Activated CD4-positive, alpha-beta T cell treated with anti-CD3 and anti-CD28 coated beads, Interleukin-2, amount 10 ng/mL, durations not matched to agents 24 days and 14 days (primary cell): ENCODE measurements at regions of chr5 and their contacts with region 1.

Region 1: GRCh38 chr5:157603333-157604190 is 28.0 kb upstream of the ADAM19 start:
- DNase-seq: peak; percentile 92
- H3K4me3 Mint-ChIP-seq: peak overlapping the region; percentile 65
- H3K27ac Mint-ChIP-seq: peak overlapping the region; percentile 88
- H3K4me1 Mint-ChIP-seq: peaks cover 73% of the 10 kb centered on the region
- H3K27me3 Mint-ChIP-seq: no peaks in the 10 kb centered on the region

Region 2: DNA sequence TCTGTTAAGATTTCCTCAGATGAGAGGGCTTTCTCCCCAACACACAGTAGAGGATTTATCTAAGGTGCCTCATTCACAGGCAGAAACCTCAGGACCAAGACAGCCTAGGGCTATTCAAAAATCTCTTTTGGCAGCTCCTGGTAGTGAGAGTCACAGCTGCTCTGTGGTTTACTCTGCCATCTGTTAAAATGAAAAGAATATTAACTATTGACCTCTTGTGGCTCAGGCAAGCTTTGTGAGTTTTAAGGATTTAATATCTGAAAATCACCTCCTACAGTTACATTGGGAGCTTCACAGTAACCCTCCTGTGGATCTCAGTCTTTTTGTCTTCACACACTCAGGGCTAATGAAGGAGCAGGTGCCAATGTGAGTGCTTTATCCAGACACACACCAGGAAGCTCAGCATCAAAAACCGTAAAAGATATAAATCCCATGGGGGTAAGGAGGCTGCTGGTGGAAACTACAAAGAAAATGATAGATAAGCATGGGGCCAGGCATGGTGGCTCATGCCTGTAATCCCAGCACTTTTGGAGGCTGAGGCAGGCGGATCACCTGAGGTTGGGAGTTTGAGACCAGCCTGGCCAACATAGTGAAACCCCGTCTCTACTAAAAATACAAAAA is 723.8 kb before region 1 on chr5:
- intact Hi-C with region 1: no loop called
- DNase-seq: no peak
- H3K4me3 Mint-ChIP-seq: no peak overlapping the region
- H3K27ac Mint-ChIP-seq: no peak overlapping the region
- H3K4me1 Mint-ChIP-seq: no peaks in the 10 kb centered on the region
- H3K27me3 Mint-ChIP-seq: peaks cover 1% of the 10 kb centered on the region

Region 3: GRCh38 chr5:157172403-157172802 is 431.2 kb before region 1 on chr5:
- intact Hi-C with region 1: loop called (anchors 10 kb)
- DNase-seq: peak; percentile 95
- H3K4me3 Mint-ChIP-seq: peak overlapping the region; percentile 81
- H3K27ac Mint-ChIP-seq: peak overlapping the region; percentile 96
- H3K4me1 Mint-ChIP-seq: peaks cover 76% of the 10 kb centered on the region
- H3K27me3 Mint-ChIP-seq: no peaks in the 10 kb centered on the region

Region 4: GRCh38 chr5:157354800-157355199 is 248.8 kb before region 1 on chr5:
- intact Hi-C with region 1: loop called (anchors 2 kb)
- DNase-seq: no peak
- H3K4me3 Mint-ChIP-seq: no peak overlapping the region
- H3K27ac Mint-ChIP-seq: peak overlapping the region; percentile 69
- H3K4me1 Mint-ChIP-seq: peaks cover 38% of the 10 kb centered on the region
- H3K27me3 Mint-ChIP-seq: no peaks in the 10 kb centered on the region

Region 5: DNA sequence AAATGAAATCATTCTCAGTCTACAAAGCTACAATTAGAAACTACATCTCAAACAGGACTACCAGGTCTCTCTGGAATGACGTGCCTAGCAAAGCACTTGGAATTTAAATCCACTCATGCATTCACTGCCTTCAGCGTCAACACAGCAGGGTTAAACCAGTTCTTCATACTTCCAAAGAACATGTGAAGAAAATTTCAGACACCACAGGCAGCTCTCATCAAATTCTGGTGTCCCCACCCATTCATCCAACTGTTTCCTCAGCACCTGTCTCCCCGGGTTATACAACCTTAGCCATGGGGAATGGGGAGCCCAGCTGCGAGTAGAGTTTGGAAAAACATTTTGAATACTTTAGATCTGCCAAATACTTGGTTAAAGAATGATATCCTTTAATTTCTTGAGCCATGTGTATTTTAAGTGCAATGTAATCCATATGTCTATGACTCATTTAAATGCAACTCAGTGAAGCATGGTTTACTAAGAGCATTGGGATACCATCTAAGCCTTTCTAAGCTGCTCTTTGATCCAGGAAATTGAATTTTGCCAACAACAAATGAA is 45.4 kb before region 1 on chr5:
- intact Hi-C with region 1: no loop called
- DNase-seq: no peak
- H3K4me3 Mint-ChIP-seq: no peak overlapping the region
- H3K27ac Mint-ChIP-seq: no peak overlapping the region
- H3K4me1 Mint-ChIP-seq: peaks cover 76% of the 10 kb centered on the region
- H3K27me3 Mint-ChIP-seq: no peaks in the 10 kb centered on the region

Region 6: DNA sequence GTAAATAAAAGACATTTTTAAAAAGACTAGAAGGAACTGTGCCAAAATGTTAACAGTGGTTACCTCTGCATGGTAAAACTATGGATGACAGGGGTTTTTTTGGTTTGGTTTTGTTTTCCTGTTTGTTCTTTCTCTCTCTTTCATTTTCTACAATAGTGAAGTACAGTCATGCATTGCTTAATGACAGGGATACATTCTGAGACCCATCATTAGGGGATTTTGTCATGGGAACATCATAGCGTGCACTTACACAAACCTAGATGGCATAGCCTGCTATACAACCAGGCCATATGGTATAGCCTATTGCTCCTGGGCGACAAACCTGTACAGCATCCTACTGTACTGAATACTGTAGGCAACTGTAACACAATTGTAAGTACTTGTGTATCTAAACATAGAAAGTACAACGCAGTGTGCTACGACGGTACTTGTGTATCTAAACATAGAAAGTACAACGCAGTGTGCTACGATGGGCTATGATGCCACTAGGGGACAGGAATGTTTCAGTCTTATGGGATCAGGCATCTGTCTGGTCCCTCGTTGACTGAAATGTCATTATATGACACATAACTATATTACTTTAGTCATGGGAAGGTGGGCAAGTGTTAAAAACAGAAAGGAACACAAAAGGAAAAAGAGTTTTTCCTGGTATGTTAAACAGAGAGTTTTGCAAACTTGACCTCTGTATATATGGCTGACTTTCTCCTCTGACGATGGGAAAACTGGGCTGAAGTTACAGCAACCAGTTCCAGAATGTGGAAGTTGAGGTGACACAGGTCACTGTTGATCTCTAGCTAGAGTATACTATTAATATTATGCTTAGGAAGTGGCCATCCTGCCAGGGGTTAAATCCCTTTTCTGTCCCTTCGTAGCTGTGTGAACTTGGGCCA is 20.6 kb before region 1 on chr5:
- intact Hi-C with region 1: loop called (anchors 1 kb)
- DNase-seq: peak; percentile 75
- H3K4me3 Mint-ChIP-seq: peak overlapping the region; percentile 65
- H3K27ac Mint-ChIP-seq: peak overlapping the region; percentile 80
- H3K4me1 Mint-ChIP-seq: peaks cover 56% of the 10 kb centered on the region
- H3K27me3 Mint-ChIP-seq: no peaks in the 10 kb centered on the region

Region 7: GRCh38 chr5:157689942-157690689 is 86.6 kb after region 1 on chr5:
- intact Hi-C with region 1: no loop called
- DNase-seq: peak; percentile 62
- H3K4me3 Mint-ChIP-seq: no peak overlapping the region
- H3K27ac Mint-ChIP-seq: no peak overlapping the region
- H3K4me1 Mint-ChIP-seq: no peaks in the 10 kb centered on the region
- H3K27me3 Mint-ChIP-seq: peaks cover 2% of the 10 kb centered on the region

Region 8: GRCh38 chr5:157731272-157732129 is 127.9 kb after region 1 on chr5 and contains the start of gene THG1L:
- intact Hi-C with region 1: loop called (anchors 2 kb)
- DNase-seq: peak; percentile 100
- H3K4me3 Mint-ChIP-seq: peak within 1 kb of the TSS; percentile 97
- H3K27ac Mint-ChIP-seq: peak within 1 kb of the TSS; percentile 98
- H3K4me1 Mint-ChIP-seq: peaks cover 25% of the 10 kb centered on the region
- H3K27me3 Mint-ChIP-seq: no peaks in the 10 kb centered on the region
- total RNA-seq, gene THG1L: 25.0 and 26.7 TPM in 2 replicates

Region 9: GRCh38 chr5:157778121-157778805 is 174.7 kb after region 1 on chr5:
- intact Hi-C with region 1: no loop called
- DNase-seq: no peak
- H3K4me3 Mint-ChIP-seq: no peak overlapping the region
- H3K27ac Mint-ChIP-seq: no peak overlapping the region
- H3K4me1 Mint-ChIP-seq: no peaks in the 10 kb centered on the region
- H3K27me3 Mint-ChIP-seq: peaks cover 6% of the 10 kb centered on the region